HepG2 (cell line): ENCODE measurements at regions of chr10 and their contacts with region 1.

Region 1: DNA sequence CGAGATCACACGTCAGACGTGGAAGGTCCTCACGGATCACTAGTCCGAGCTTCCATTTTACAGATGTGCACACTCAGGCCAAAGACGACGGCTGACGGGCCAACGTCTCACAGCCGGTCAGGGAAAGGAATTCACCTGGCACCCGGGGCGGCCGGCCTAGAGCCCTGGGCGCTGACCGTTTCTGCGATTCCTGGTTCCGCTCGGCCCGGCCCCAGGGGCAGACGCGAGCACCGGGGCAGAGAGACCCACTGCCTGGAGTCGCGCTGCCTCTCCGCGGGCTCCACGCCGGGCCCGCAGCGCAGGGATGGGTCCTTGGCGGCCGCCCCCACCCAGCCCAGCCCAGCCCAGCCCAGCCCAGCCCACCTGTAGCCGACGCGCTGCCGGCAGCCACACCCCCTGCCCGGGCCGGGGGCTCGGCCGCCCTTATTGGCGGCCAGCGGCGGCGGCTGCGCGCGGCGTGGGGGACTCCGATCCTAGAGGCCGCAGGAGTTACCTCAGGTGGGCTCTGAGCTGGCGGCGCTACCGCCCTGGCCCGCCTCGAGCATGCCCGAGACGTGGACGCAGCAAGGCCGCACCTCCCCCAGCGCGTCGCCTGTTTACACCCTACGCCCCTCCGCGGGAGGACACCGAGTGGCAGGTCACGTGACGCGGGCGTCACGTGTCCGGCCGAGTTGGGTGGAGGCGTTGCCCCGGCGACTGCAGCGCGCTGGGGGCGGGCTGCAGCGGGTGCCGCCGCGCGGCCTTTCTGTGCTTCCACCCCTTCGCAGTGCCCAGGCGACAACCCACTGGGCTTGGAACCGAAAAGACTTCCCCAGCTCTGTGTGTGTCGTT is 78.1 kb downstream of the ZFAND4 start:
- DNase-seq: peak; percentile 90
- ATAC-seq: peak; percentile 92
- H3K4me3 ChIP-seq: peak overlapping the region; percentile 81 to 92 (median 88)
- H3K27ac ChIP-seq: peak overlapping the region; percentile 77
- H3K4me1 ChIP-seq: peaks cover 64% of the 10 kb centered on the region
- H3K27me3 ChIP-seq: no peaks in the 10 kb centered on the region; a peak in 1 of 5 replicates
- CTCF ChIP-seq: peak; percentile 55
- EP300 ChIP-seq: peak in 1 of 2 experiments; percentile 72; a peak in 2 of 4 replicates
- POLR2A ChIP-seq: peak; percentile 58 to 76
- RAD21 ChIP-seq: peak; percentile 75

Region 2: GRCh38 chr10:45502458-45502857 is 92.0 kb before region 1 on chr10:
- CTCF ChIA-PET with region 1: no interaction called
- POLR2A ChIA-PET with region 1: no interaction called
- in situ Hi-C with region 1: no loop called
- intact Hi-C with region 1: loop called (anchors 5 kb)
- DNase-seq: peak; percentile 58
- ATAC-seq: peak; percentile 32; the same call in 2 of the 3 replicates
- H3K4me3 ChIP-seq: no peak overlapping the region
- H3K27ac ChIP-seq: peak overlapping the region; percentile 22
- H3K4me1 ChIP-seq: peaks cover 23% of the 10 kb centered on the region
- H3K27me3 ChIP-seq: no peaks in the 10 kb centered on the region
- CTCF ChIP-seq: no peak
- EP300 ChIP-seq: peak in 1 of 2 experiments; percentile 80; a peak in 1 of 4 replicates
- POLR2A ChIP-seq: no peak
- RAD21 ChIP-seq: no peak

Region 3: DNA sequence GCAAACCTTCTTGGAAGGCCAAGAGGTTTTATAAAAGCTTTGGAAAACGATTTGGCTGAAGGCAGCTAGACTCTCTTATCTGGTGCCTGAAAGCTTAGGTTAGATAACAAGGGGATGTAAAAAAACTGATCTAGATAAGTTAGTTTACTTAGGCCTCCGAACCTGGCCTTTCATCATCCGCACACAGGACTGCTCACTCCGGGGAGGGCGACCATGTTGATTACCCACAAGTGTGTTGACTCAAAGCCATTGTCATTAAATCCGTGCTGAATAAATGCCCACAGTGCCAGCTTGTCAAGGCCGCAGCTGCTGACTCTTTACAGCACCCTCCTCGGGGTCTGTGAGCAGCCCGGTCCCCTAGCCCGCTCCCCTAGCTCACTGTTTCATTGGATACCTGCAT is 34.2 kb before region 1 on chr10:
- CTCF ChIA-PET with region 1: no interaction called
- POLR2A ChIA-PET with region 1: interaction called, 3 read pairs
- in situ Hi-C with region 1: no loop called
- intact Hi-C with region 1: loop called (anchors 1 kb)
- DNase-seq: peak; percentile 36
- ATAC-seq: no peak
- H3K4me3 ChIP-seq: no peak overlapping the region
- H3K27ac ChIP-seq: no peak overlapping the region
- H3K4me1 ChIP-seq: peaks cover 34% of the 10 kb centered on the region
- H3K27me3 ChIP-seq: no peaks in the 10 kb centered on the region
- CTCF ChIP-seq: no peak
- EP300 ChIP-seq: no peak; a peak in 1 of 4 replicates
- POLR2A ChIP-seq: no peak
- RAD21 ChIP-seq: no peak